WTC11 (cell line): ENCODE measurements at regions of chr16 and their contacts with region 1.

Region 1: DNA sequence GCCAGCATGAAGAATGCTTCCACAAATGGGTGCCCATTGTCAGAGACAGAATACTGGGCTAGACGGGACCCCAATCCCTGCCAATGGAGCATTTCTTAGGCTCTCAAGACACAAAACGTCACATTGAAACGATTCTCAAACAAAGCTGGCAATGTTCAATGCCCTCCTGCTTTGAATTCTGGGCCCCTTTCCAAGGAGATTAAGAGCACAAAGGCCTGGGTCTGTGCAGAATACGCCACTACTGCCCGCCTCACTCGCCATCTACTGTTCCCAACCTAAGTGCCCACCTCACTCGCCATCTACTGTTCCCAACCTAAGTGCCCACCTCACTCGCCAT is 9.7 kb downstream of the CFAP20 start:
- DNase-seq: no peak
- ATAC-seq: no peak
- H3K4me3 Mint-ChIP-seq: no peak overlapping the region
- H3K27ac Mint-ChIP-seq: no peak overlapping the region
- H3K4me1 Mint-ChIP-seq: peaks cover 18% of the 10 kb centered on the region
- H3K27me3 Mint-ChIP-seq: no peaks in the 10 kb centered on the region
- CTCF ChIP-seq: no peak

Region 2: DNA sequence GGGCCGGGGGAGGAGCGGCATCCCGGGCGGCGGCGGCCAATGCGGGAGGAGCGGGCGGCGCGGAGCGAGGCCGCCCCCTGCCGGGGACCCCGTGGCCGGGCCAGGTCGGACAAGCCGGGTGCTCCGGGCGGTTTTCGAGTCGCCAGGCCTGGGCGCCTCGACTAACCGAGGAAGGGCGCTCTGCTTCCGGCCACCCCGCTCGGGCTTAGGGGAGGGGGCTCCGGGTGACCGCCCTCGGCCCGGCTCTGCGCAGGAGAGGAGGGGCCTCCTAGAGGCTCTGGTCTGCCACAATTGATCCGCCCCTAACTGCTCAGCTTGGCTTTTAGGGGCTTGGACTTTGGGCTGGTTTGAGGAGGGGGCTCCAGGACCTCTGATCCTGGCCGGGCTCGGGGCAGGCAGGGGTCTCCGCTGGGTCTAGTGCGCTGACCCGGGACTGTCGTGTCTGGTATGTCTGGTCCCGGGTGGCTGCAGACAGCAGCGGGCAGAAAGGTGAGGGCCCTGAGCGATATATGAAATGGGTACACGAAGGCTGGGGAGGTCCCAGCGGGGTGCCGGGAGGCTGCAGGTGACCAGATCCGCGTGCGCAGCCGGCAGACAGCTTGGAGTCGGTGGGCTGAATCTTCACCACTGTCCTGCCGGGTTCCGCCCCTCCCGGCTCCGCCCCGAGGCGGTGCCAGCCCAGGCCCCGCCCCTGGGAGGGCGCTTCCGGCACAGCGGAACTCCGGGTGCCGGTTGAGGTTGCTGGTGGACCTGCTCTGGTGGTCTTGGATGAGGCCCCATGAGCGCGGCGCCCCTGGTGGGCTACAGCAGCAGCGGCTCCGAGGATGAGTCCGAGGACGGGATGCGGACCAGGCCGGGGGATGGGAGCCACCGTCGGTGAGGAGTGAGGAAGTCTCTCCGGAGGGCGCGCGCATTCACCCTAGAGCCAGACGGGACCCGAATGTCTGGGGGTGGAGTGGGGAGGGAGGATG is 118.5 kb before region 1 on chr16 and contains the start of gene USB1:
- CTCF ChIA-PET with region 1: interaction called, 12 read pairs
- POLR2A ChIA-PET with region 1: no interaction called
- DNase-seq: peak; percentile 87
- ATAC-seq: peak; percentile 85
- H3K4me3 Mint-ChIP-seq: peak within 1 kb of the TSS; percentile 83
- H3K27ac Mint-ChIP-seq: peak within 1 kb of the TSS; percentile 70
- H3K4me1 Mint-ChIP-seq: peaks cover 23% of the 10 kb centered on the region
- H3K27me3 Mint-ChIP-seq: no peaks in the 10 kb centered on the region
- CTCF ChIP-seq: no peak; the same call in 1 of the 2 replicates
- total RNA-seq, gene USB1: 67.1 to 75.2 TPM (median 69.6 TPM) in 3 replicates

Region 3: DNA sequence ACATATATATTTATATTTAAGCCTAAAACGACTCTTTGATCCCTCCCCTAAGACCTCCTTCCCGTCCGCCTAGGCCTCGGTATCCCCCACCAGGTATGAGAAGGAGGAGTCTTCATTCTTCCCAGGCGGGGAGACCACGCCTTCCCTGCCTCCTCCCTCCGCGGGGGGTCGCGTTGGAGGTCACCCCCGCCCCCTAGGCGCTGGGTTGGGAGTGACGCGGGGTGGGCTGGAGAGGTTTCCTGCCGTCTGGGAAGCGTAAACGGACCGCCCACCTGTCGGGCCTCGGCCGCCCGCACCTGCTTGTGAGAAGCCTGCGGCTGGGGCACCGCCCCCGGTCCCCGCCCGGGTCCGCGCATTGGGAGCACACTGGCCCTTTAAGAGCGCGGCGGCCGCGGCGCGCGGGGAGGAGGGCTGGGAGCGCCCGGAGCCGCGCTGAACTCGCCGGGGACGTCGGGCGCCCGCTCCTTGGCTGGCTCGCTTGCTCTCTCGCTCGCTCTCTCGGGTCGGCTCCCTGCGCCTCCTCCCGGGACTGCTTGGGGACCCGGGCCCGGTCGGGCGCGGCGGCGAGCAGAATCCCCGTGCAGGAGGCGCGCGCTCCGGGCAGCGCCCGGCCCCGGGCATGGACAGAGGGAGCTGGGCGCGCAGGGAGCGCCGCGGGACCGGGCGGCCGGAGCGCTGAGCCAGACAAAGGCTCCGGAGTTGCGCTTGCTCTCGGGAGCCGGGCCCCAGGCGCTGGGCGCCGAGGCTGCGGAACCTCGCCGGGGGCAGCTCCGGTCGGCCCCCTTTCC is 93.9 kb before region 1 on chr16 and contains the start of gene MMP15:
- CTCF ChIA-PET with region 1: interaction called, 55 read pairs
- POLR2A ChIA-PET with region 1: interaction called, 14 read pairs
- DNase-seq: peak; percentile 98
- ATAC-seq: peak; percentile 61
- H3K4me3 Mint-ChIP-seq: peak within 1 kb of the TSS; percentile 82
- H3K27ac Mint-ChIP-seq: peak within 1 kb of the TSS; percentile 95
- H3K4me1 Mint-ChIP-seq: peaks cover 54% of the 10 kb centered on the region
- H3K27me3 Mint-ChIP-seq: peaks cover 10% of the 10 kb centered on the region
- CTCF ChIP-seq: no peak
- total RNA-seq, gene MMP15: 55.5 to 60.7 TPM (median 58.2 TPM) in 3 replicates

Region 4: GRCh38 chr16:58047557-58048348 is 71.7 kb before region 1 on chr16:
- CTCF ChIA-PET with region 1: interaction called, 23 read pairs
- POLR2A ChIA-PET with region 1: no interaction called
- DNase-seq: no peak
- ATAC-seq: peak; percentile 64
- H3K4me3 Mint-ChIP-seq: no peak overlapping the region
- H3K27ac Mint-ChIP-seq: no peak overlapping the region
- H3K4me1 Mint-ChIP-seq: peaks cover 20% of the 10 kb centered on the region
- H3K27me3 Mint-ChIP-seq: no peaks in the 10 kb centered on the region
- CTCF ChIP-seq: no peak

Region 5: DNA sequence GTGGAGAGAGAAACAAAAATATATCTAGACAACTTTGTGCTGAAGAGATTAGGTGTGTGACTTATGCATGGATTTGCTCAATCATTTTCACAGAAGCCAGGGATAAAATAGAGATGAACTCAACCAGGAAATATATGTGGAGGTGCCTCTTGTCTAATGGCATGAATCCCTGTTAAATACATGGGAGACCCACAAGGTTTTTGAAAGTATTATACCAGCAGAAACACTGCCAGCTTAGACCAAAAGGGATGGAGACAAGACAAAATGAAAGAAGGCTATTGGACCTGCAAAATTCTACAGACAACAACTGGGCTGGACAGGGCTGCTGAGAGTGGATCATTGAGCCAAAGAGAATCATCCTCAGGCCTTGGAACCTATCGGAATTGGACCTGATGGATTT is 43.0 kb before region 1 on chr16:
- CTCF ChIA-PET with region 1: no interaction called
- POLR2A ChIA-PET with region 1: no interaction called
- DNase-seq: no peak
- ATAC-seq: no peak
- H3K4me3 Mint-ChIP-seq: no peak overlapping the region
- H3K27ac Mint-ChIP-seq: no peak overlapping the region
- H3K4me1 Mint-ChIP-seq: no peaks in the 10 kb centered on the region
- H3K27me3 Mint-ChIP-seq: peaks cover 17% of the 10 kb centered on the region
- CTCF ChIP-seq: no peak

Region 6: GRCh38 chr16:58098207-58099096 is 21.0 kb before region 1 on chr16:
- CTCF ChIA-PET with region 1: interaction called, 63 read pairs
- POLR2A ChIA-PET with region 1: interaction called, 13 read pairs
- DNase-seq: no peak
- ATAC-seq: no peak
- H3K4me3 Mint-ChIP-seq: no peak overlapping the region
- H3K27ac Mint-ChIP-seq: no peak overlapping the region
- H3K4me1 Mint-ChIP-seq: peaks cover 19% of the 10 kb centered on the region
- H3K27me3 Mint-ChIP-seq: peaks cover 2% of the 10 kb centered on the region
- CTCF ChIP-seq: no peak

Region 7: DNA sequence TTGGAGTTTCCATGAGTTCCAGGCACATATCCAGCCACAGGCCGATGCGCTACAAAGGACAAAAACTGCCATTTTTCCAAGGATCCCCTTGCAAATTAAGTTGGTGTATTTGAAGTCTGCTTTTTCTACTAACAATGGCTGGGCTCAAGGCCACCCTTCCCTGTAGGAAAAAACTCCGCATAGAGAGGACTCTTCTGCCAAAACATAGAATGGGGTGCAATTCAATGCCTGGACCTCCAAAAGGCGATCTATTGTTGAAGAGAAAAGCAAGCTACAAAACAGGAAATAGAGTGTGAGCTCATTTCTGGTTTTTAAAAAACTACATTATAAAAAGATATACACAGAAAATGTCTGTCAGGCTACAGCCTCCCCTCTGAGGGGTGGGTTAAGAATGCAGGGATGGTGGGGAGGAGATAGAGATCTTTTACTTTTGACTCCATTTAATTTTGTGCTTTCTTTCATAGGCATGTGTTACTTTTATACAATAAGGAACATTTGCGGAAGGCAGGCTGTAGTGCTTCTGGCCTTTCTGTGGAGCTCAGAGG is 198.2 kb after region 1 on chr16:
- CTCF ChIA-PET with region 1: no interaction called
- POLR2A ChIA-PET with region 1: no interaction called
- DNase-seq: no peak
- ATAC-seq: no peak
- H3K4me3 Mint-ChIP-seq: no peak overlapping the region
- H3K27ac Mint-ChIP-seq: no peak overlapping the region
- H3K4me1 Mint-ChIP-seq: peaks cover 8% of the 10 kb centered on the region; the same call in 1 of the 2 replicates
- H3K27me3 Mint-ChIP-seq: no peaks in the 10 kb centered on the region; the same call in 1 of the 2 replicates
- CTCF ChIP-seq: no peak

Region 8: GRCh38 chr16:58409316-58409973 is 290.0 kb after region 1 on chr16:
- CTCF ChIA-PET with region 1: no interaction called
- POLR2A ChIA-PET with region 1: no interaction called
- DNase-seq: no peak
- ATAC-seq: no peak
- H3K4me3 Mint-ChIP-seq: no peak overlapping the region
- H3K27ac Mint-ChIP-seq: no peak overlapping the region
- H3K4me1 Mint-ChIP-seq: no peaks in the 10 kb centered on the region
- H3K27me3 Mint-ChIP-seq: no peaks in the 10 kb centered on the region; the same call in 1 of the 2 replicates
- CTCF ChIP-seq: no peak